ENCODE measurements at regions of chr14 and their contacts with region 1.

Region 1: GRCh38 chr14:56491299-56492285 is 88.0 kb upstream of the TMEM260 start:
- DNase-seq: peak; percentile 90
- H3K4me3 ChIP-seq: no peak overlapping the region
- H3K27ac ChIP-seq: no peak overlapping the region
- H3K4me1 ChIP-seq: peaks cover 33% of the 10 kb centered on the region
- H3K27me3 ChIP-seq: no peaks in the 10 kb centered on the region
- CTCF ChIP-seq: peak; percentile 85

Region 2: DNA sequence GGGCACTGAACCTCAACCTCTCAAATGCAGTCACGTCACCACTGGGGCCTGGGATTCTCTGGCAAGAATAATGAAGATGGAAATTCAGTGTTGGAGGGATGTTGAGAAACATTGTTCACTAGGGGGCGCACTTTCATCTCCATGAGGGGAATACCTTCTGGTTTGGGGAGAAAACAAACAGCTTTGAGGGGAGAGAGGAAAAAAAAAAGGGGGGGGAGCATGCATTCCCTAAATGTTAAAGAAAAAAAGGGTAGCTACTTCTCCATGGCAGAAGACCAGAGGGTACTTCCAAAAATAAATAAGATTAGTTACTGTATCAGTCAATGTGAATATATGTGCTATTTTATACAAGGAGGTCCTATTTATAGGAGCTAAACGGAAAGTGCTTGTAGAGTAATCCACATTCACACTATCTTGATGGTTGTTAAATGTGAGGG is 1045.4 kb before region 1 on chr14:
- CTCF ChIA-PET with region 1: no interaction called
- POLR2A ChIA-PET with region 1: no interaction called
- intact Hi-C with region 1: loop called (anchors 5 kb)
- DNase-seq: peak; percentile 93
- H3K4me3 ChIP-seq: peak overlapping the region; percentile 23
- H3K27ac ChIP-seq: peak overlapping the region; percentile 21
- H3K4me1 ChIP-seq: peaks cover 26% of the 10 kb centered on the region
- H3K27me3 ChIP-seq: no peaks in the 10 kb centered on the region
- CTCF ChIP-seq: peak; percentile 81

Region 3: DNA sequence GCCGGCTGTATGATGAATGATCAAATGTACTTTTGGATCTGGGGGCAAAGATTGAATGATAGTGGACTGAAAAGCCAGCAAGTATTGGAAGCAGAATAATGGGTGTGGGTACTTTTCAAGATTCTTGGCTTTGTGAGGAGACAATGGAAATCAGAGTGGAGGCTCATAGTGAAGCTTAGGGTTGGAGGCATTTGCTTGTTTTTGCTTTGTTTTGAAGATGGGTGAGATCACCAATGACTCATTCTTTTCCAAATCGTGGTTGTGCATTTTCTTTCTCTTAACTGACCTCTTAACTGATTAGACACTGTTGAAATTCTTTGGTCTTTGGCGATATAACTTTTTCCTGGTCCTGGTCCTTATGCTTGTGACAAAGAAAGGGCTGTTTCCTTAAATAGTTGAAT is 319.0 kb before region 1 on chr14:
- CTCF ChIA-PET with region 1: no interaction called
- POLR2A ChIA-PET with region 1: no interaction called
- intact Hi-C with region 1: no loop called
- DNase-seq: no peak
- H3K4me3 ChIP-seq: no peak overlapping the region
- H3K27ac ChIP-seq: no peak overlapping the region
- H3K4me1 ChIP-seq: no peaks in the 10 kb centered on the region
- H3K27me3 ChIP-seq: no peaks in the 10 kb centered on the region
- CTCF ChIP-seq: no peak

Region 4: DNA sequence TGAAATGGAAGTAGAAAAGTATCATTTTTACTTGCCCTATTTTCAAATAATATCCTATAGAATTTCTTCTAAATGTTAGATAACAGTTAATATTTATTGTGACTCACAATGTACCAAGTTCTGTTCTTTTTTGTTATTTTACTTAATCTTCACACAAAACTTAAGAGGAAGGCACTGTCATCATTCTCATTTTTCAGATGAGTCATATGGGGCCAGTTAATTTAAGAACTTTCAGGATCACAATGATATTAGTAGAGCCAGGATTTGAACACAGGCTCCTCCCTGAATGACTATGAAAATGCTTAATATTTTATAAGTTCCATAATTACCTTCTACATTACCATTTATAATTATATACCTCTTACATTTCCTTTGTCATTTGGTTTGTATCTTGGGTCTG is 77.6 kb after region 1 on chr14:
- CTCF ChIA-PET with region 1: interaction called, 11 read pairs
- POLR2A ChIA-PET with region 1: no interaction called
- intact Hi-C with region 1: no loop called
- DNase-seq: no peak
- H3K4me3 ChIP-seq: no peak overlapping the region
- H3K27ac ChIP-seq: no peak overlapping the region
- H3K4me1 ChIP-seq: no peaks in the 10 kb centered on the region
- H3K27me3 ChIP-seq: no peaks in the 10 kb centered on the region
- CTCF ChIP-seq: no peak

Region 5: GRCh38 chr14:56821807-56822615 is 330.4 kb after region 1 on chr14:
- CTCF ChIA-PET with region 1: no interaction called
- POLR2A ChIA-PET with region 1: no interaction called
- intact Hi-C with region 1: loop called (anchors 10 kb)
- DNase-seq: peak; percentile 76
- H3K4me3 ChIP-seq: peak overlapping the region; percentile 4
- H3K27ac ChIP-seq: peak overlapping the region; percentile 50
- H3K4me1 ChIP-seq: peaks cover 71% of the 10 kb centered on the region
- H3K27me3 ChIP-seq: no peaks in the 10 kb centered on the region
- CTCF ChIP-seq: no peak

Region 6: DNA sequence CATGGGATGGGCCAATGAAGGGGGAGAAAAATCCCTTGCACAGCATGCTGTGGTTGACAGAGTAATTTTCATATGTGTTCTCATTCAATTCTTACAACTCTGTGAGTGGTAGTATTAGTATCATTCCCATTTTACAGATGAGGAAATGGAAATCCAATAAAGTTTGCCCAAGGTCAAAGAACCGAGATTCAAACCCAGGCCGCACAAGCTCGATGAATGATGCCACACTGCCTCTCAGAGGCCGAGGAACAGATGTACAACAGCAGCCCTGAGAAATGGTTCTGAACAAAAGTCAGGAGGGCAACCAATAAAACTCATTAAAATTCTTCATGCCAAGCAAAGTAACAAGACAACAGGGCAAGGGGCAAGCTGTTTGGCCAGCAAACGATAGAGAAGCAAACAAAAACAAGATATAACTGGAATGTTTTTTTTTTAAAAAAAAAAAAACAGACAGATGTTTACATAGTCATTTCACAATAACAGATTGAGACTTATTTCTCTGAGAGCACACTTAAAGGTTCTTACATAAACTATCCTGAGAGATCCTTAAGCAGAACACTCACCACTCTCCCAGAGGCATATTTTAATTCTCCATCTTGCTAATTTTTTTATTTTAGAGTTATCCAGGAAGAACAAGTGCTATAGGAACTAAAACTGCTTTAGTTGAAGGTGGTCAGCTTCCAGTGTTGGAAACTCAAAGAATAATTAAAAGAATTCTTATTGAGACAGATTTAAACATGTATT is 691.3 kb after region 1 on chr14:
- CTCF ChIA-PET with region 1: interaction called, 7 read pairs
- POLR2A ChIA-PET with region 1: no interaction called
- intact Hi-C with region 1: loop called (anchors 2 kb)
- DNase-seq: peak; percentile 76
- H3K4me3 ChIP-seq: no peak overlapping the region
- H3K27ac ChIP-seq: no peak overlapping the region
- H3K4me1 ChIP-seq: peaks cover 7% of the 10 kb centered on the region
- H3K27me3 ChIP-seq: no peaks in the 10 kb centered on the region
- CTCF ChIP-seq: peak; percentile 78

Region 7: GRCh38 chr14:57317316-57317715 is 825.7 kb after region 1 on chr14:
- CTCF ChIA-PET with region 1: interaction called, 5 read pairs
- POLR2A ChIA-PET with region 1: no interaction called
- intact Hi-C with region 1: loop called (anchors 1 kb)
- DNase-seq: peak; percentile 93
- H3K4me3 ChIP-seq: no peak overlapping the region
- H3K27ac ChIP-seq: no peak overlapping the region
- H3K4me1 ChIP-seq: peaks cover 21% of the 10 kb centered on the region
- H3K27me3 ChIP-seq: no peaks in the 10 kb centered on the region
- CTCF ChIP-seq: peak; percentile 91

Measured in A673 (cell line).